B cell (primary cell): ENCODE measurements at regions of chrX and their contacts with region 1.

Region 1: DNA sequence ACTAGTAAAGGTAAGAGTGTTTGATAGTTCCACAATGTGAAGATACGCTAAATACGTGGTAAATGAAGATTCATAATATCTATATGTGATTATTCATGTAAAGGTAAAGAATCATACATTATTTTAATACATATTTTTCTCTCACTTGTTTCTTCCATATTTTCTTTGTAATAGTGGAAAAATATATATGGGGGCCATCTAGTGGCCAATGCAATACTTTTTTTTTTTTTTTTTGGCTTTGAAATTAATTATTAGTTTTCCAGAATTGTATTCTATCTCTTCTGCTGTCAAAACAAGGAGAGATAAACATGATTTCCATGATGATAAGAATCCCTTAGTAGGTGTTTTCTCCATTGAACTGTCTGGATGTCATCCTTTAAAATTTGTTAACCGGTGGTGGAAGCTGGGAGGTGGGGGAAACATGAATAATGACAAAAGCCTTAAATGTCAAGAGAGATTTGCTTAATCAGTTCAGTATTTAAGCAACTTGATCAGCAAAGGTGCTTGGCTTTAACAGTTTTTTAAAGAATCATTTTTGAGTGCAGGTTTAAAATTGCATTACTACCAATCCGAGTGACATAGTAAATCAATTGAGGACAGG is 508.7 kb upstream of the HTR2C start:
- DNase-seq: peak; percentile 2
- ATAC-seq: no peak
- H3K4me3 ChIP-seq: no peak overlapping the region
- H3K4me3 Mint-ChIP-seq: no peak overlapping the region
- H3K27ac ChIP-seq: no peak overlapping the region
- H3K27ac Mint-ChIP-seq: no peak overlapping the region
- H3K4me1 ChIP-seq: peaks cover 0 to 4% of the 10 kb centered on the region in 2 donors
- H3K4me1 Mint-ChIP-seq: peaks cover 17% of the 10 kb centered on the region
- H3K27me3 ChIP-seq: no peaks in the 10 kb centered on the region
- H3K27me3 Mint-ChIP-seq: no peaks in the 10 kb centered on the region
- CTCF ChIP-seq: peak; percentile 50

Region 2: GRCh38 chrX:113741744-113742143 is 333.4 kb before region 1 on chrX:
- CTCF ChIA-PET with region 1: no interaction called
- POLR2A ChIA-PET with region 1: no interaction called
- intact Hi-C with region 1: loop called (anchors 10 kb)
- DNase-seq: peak; percentile 11
- ATAC-seq: no peak
- H3K4me3 ChIP-seq: no peak overlapping the region
- H3K4me3 Mint-ChIP-seq: no peak overlapping the region
- H3K27ac ChIP-seq: peak overlapping the region in 1 of 2 donors; percentile 34
- H3K27ac Mint-ChIP-seq: peak overlapping the region; percentile 63
- H3K4me1 ChIP-seq: peaks cover 34 to 39% of the 10 kb centered on the region in 2 donors
- H3K4me1 Mint-ChIP-seq: peaks cover 42% of the 10 kb centered on the region
- H3K27me3 ChIP-seq: no peaks in the 10 kb centered on the region
- H3K27me3 Mint-ChIP-seq: no peaks in the 10 kb centered on the region
- CTCF ChIP-seq: no peak

Region 3: GRCh38 chrX:113929004-113929403 is 146.2 kb before region 1 on chrX:
- CTCF ChIA-PET with region 1: no interaction called
- POLR2A ChIA-PET with region 1: no interaction called
- intact Hi-C with region 1: loop called (anchors 10 kb)
- DNase-seq: peak; percentile 21
- ATAC-seq: no peak
- H3K4me3 ChIP-seq: no peak overlapping the region
- H3K4me3 Mint-ChIP-seq: no peak overlapping the region
- H3K27ac ChIP-seq: no peak overlapping the region
- H3K27ac Mint-ChIP-seq: no peak overlapping the region
- H3K4me1 ChIP-seq: no peaks in the 10 kb centered on the region
- H3K4me1 Mint-ChIP-seq: no peaks in the 10 kb centered on the region
- H3K27me3 ChIP-seq: no peaks in the 10 kb centered on the region
- H3K27me3 Mint-ChIP-seq: no peaks in the 10 kb centered on the region
- CTCF ChIP-seq: peak; percentile 11